Naive thymus-derived CD4-positive, alpha-beta T cell (primary cell): ENCODE measurements at regions of chr10 and their contacts with region 1.

Region 1: GRCh38 chr10:68955832-68956532 is at the start of gene DDX21:
- DNase-seq: peak; percentile 70 to 94 (median 89)
- ATAC-seq: peak; percentile 89
- H3K4me3 ChIP-seq: peak within 1 kb of the TSS; percentile 71
- H3K4me3 Mint-ChIP-seq: peak within 1 kb of the TSS; percentile 91 to 100 (median 98)
- H3K27ac ChIP-seq: peak within 1 kb of the TSS; percentile 97
- H3K27ac Mint-ChIP-seq: peak within 1 kb of the TSS; percentile 96 to 100 (median 99)
- H3K4me1 ChIP-seq: peaks cover 7 to 11% of the 10 kb centered on the region in 2 donors
- H3K4me1 Mint-ChIP-seq: peaks cover 15 to 53% (median 33%) of the 10 kb centered on the region in 7 donors
- H3K27me3 ChIP-seq: no peaks in the 10 kb centered on the region
- H3K27me3 Mint-ChIP-seq: no peaks in the 10 kb centered on the region
- total RNA-seq, gene DDX21: 43.5 to 101 (median 86.7) TPM

Region 2: GRCh38 chr10:67884313-67884841 is 1071.6 kb before region 1 on chr10 and contains the start of gene SIRT1:
- CTCF ChIA-PET with region 1: no interaction called
- POLR2A ChIA-PET with region 1: no interaction called
- intact Hi-C with region 1: loop called in 1 of 2 experiments (anchors 10 kb)
- DNase-seq: peak; percentile 87 to 95 (median 90)
- ATAC-seq: peak; percentile 89
- H3K4me3 ChIP-seq: peak within 1 kb of the TSS; percentile 75
- H3K4me3 Mint-ChIP-seq: peak within 1 kb of the TSS; percentile 86 to 98 (median 95)
- H3K27ac ChIP-seq: peak within 1 kb of the TSS; percentile 83
- H3K27ac Mint-ChIP-seq: peak within 1 kb of the TSS; percentile 90 to 98 (median 95)
- H3K4me1 ChIP-seq: peaks cover 12 to 16% of the 10 kb centered on the region in 2 donors
- H3K4me1 Mint-ChIP-seq: peaks cover 27 to 43% (median 35%) of the 10 kb centered on the region in 7 donors
- H3K27me3 ChIP-seq: no peaks in the 10 kb centered on the region
- H3K27me3 Mint-ChIP-seq: peaks cover 0 to 5% (median 0%) of the 10 kb centered on the region in 5 donors
- total RNA-seq, gene SIRT1: 25.9 to 66.8 (median 59.5) TPM

Region 3: DNA sequence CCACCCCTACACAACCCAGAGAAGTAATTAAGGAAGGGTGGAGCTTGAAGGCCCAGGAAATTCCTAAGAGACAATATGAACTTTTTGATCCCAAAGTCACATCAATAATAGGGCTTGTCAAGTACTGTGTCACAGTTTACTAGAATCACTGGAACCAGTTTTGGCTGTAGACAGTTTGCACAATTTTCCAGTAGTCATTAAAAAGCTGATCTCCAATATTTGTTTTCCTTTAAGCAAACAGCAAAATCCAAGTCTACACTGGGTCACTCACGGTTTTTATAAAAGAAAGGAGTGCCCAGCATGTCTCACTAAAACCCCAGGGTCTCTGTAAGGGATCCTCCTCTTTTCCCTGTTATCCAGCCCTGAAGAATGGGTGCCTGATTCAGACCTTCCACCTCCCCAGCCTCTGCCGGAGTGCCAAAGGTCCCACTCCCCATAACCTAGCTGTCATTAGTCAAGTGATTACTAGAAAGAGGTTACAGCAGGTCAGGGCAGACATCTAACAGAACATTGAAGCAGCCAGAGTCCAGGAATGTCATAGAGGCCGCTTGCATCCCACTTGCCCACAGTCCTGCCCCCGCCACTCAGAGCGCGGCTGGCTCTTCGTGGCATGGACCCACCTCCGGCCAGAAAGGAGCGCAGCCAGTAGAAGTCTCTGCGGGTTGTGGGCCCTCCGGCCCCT is 429.2 kb before region 1 on chr10:
- CTCF ChIA-PET with region 1: no interaction called
- POLR2A ChIA-PET with region 1: no interaction called
- intact Hi-C with region 1: loop called (anchors 1 to 2 kb)
- DNase-seq: peak in 1 of 9 donors; percentile 4
- ATAC-seq: no peak
- H3K4me3 ChIP-seq: peak overlapping the region; percentile 91
- H3K4me3 Mint-ChIP-seq: peak overlapping the region; percentile 87 to 94 (median 92)
- H3K27ac ChIP-seq: peak overlapping the region; percentile 96
- H3K27ac Mint-ChIP-seq: peak overlapping the region; percentile 78 to 97 (median 95)
- H3K4me1 ChIP-seq: peaks cover 0 to 5% of the 10 kb centered on the region in 2 donors
- H3K4me1 Mint-ChIP-seq: peaks cover 0 to 20% (median 7%) of the 10 kb centered on the region in 7 donors
- H3K27me3 ChIP-seq: no peaks in the 10 kb centered on the region
- H3K27me3 Mint-ChIP-seq: no peaks in the 10 kb centered on the region

Region 4: DNA sequence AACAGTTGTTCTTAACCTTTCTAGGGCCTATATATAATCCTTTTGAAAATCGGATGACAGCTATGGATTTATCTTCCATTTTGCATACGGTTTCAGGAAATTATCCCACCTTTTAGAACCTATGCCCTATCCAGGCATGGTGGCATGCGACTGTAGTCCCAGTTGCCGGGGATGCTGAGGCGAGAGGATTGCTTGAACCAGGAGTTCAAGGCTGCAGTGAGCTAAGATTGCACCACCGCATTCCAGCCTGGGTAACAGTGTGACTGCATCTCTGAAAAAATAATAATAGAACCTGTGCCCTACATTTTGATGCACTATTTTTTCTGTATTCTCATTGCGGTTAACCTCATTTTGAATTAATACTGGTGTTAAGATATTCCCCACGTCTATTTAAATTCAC is 223.3 kb before region 1 on chr10:
- CTCF ChIA-PET with region 1: no interaction called
- POLR2A ChIA-PET with region 1: no interaction called
- intact Hi-C with region 1: no loop called
- DNase-seq: no peak
- ATAC-seq: no peak
- H3K4me3 ChIP-seq: no peak overlapping the region
- H3K4me3 Mint-ChIP-seq: no peak overlapping the region
- H3K27ac ChIP-seq: no peak overlapping the region
- H3K27ac Mint-ChIP-seq: peak overlapping the region in 1 of 9 donors; percentile 39
- H3K4me1 ChIP-seq: no peaks in the 10 kb centered on the region
- H3K4me1 Mint-ChIP-seq: peaks cover 9 to 29% (median 13%) of the 10 kb centered on the region in 7 donors
- H3K27me3 ChIP-seq: no peaks in the 10 kb centered on the region
- H3K27me3 Mint-ChIP-seq: no peaks in the 10 kb centered on the region

Region 5: DNA sequence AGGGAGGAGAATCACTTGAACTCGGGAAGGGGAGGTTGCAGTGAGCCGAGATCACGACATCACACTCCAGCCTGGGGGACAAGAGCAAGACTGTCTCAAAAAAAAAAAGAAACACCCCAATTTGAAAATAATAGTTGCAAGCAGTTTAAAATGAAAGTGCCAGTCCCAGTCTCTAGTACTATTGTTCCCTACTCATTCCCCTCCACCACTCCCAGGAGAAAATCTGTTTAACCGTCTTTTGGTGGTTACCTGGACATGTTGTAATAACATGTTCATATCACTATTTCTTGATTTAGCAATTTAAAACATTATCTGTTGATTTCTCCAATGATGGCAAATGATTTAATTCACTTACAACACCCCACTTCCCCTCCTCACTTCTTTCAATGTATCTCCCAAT is 77.3 kb after region 1 on chr10:
- CTCF ChIA-PET with region 1: no interaction called
- POLR2A ChIA-PET with region 1: no interaction called
- intact Hi-C with region 1: no loop called
- DNase-seq: no peak
- ATAC-seq: no peak
- H3K4me3 ChIP-seq: no peak overlapping the region
- H3K4me3 Mint-ChIP-seq: no peak overlapping the region
- H3K27ac ChIP-seq: no peak overlapping the region
- H3K27ac Mint-ChIP-seq: no peak overlapping the region
- H3K4me1 ChIP-seq: no peaks in the 10 kb centered on the region
- H3K4me1 Mint-ChIP-seq: no peaks in the 10 kb centered on the region
- H3K27me3 ChIP-seq: no peaks in the 10 kb centered on the region
- H3K27me3 Mint-ChIP-seq: no peaks in the 10 kb centered on the region

Region 6: GRCh38 chr10:69087590-69088470 is 131.8 kb after region 1 on chr10 and contains the start of gene SRGN:
- CTCF ChIA-PET with region 1: interaction called, 11 read pairs
- POLR2A ChIA-PET with region 1: interaction called, 11 read pairs
- intact Hi-C with region 1: loop called (anchors 1 kb)
- DNase-seq: peak; percentile 54 to 94 (median 87)
- ATAC-seq: peak; percentile 76
- H3K4me3 ChIP-seq: peak within 1 kb of the TSS; percentile 84
- H3K4me3 Mint-ChIP-seq: peak within 1 kb of the TSS; percentile 85 to 95 (median 93)
- H3K27ac ChIP-seq: peak within 1 kb of the TSS; percentile 97
- H3K27ac Mint-ChIP-seq: peak within 1 kb of the TSS; percentile 93 to 99 (median 98)
- H3K4me1 ChIP-seq: peaks cover 28 to 46% of the 10 kb centered on the region in 2 donors
- H3K4me1 Mint-ChIP-seq: peaks cover 25 to 66% (median 58%) of the 10 kb centered on the region in 7 donors
- H3K27me3 ChIP-seq: no peaks in the 10 kb centered on the region
- H3K27me3 Mint-ChIP-seq: no peaks in the 10 kb centered on the region
- total RNA-seq, gene SRGN: 66.6 to 748 (median 227) TPM

Region 7: DNA sequence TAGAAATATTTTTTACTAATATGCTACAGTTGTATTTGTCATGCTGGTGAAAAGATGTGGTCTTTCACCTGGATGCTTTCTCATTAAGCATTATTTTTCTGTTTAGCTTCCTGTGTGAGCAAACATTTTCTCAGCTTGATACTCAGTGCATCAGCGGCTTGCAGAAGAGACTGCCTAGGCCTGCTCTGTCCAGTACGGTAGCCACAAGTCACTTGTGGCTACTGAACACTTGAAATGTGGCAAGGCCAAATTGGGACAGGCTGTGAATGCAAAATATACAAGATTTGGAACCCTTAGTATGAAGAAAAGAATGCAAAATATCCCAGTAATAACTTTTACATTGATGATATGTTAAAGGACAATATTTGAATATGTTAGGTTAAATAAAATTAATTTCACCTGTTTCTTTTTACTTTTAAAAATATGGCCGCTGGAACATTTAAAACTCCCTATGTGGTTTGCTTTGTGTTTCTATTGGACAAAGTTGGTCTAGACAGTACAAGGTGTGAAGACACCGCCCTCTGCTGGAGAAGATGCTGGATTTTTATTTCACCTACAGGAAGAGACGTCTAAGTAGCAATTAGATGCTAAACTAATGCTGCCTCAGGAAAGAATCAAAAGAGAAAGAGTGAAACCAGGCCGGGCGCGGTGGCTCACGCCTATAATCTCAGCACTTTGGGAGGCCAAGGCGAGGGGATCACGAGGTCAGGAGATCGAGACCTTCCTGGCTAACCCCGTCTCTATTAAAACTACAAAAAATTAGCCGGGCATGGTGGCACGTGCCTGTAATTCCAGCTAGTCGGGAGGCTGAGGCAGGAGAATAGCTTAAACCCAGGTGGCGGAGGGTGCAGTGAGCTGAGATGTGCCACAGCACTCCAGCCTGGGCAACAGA is 137.2 kb after region 1 on chr10:
- CTCF ChIA-PET with region 1: interaction called, 11 read pairs
- POLR2A ChIA-PET with region 1: interaction called, 11 read pairs
- intact Hi-C with region 1: loop called (anchors 1 kb)
- DNase-seq: peak; percentile 43 to 89 (median 85)
- ATAC-seq: peak; percentile 61
- H3K4me3 ChIP-seq: peak overlapping the region; percentile 19
- H3K4me3 Mint-ChIP-seq: peak overlapping the region in 7 of 10 donors; percentile 4 to 36 (median 15)
- H3K27ac ChIP-seq: peak overlapping the region; percentile 54
- H3K27ac Mint-ChIP-seq: peak overlapping the region; percentile 23 to 90 (median 63)
- H3K4me1 ChIP-seq: peaks cover 28 to 37% of the 10 kb centered on the region in 2 donors
- H3K4me1 Mint-ChIP-seq: peaks cover 23 to 64% (median 55%) of the 10 kb centered on the region in 7 donors
- H3K27me3 ChIP-seq: no peaks in the 10 kb centered on the region
- H3K27me3 Mint-ChIP-seq: no peaks in the 10 kb centered on the region

Region 8: GRCh38 chr10:69179743-69180524 is 224.0 kb after region 1 on chr10 and contains the start of gene SUPV3L1:
- CTCF ChIA-PET with region 1: no interaction called
- POLR2A ChIA-PET with region 1: no interaction called
- intact Hi-C with region 1: loop called (anchors 1 to 2 kb)
- DNase-seq: peak; percentile 72 to 91 (median 87)
- ATAC-seq: peak; percentile 87
- H3K4me3 ChIP-seq: peak within 1 kb of the TSS; percentile 83
- H3K4me3 Mint-ChIP-seq: peak within 1 kb of the TSS; percentile 85 to 98 (median 96)
- H3K27ac ChIP-seq: peak within 1 kb of the TSS; percentile 95
- H3K27ac Mint-ChIP-seq: peak within 1 kb of the TSS; percentile 98 to 100 (median 99)
- H3K4me1 ChIP-seq: peaks cover 12 to 15% of the 10 kb centered on the region in 2 donors
- H3K4me1 Mint-ChIP-seq: peaks cover 22 to 55% (median 38%) of the 10 kb centered on the region in 7 donors
- H3K27me3 ChIP-seq: no peaks in the 10 kb centered on the region
- H3K27me3 Mint-ChIP-seq: no peaks in the 10 kb centered on the region
- total RNA-seq, gene SUPV3L1: 39.3 to 63.2 (median 42.1) TPM

Region 9: DNA sequence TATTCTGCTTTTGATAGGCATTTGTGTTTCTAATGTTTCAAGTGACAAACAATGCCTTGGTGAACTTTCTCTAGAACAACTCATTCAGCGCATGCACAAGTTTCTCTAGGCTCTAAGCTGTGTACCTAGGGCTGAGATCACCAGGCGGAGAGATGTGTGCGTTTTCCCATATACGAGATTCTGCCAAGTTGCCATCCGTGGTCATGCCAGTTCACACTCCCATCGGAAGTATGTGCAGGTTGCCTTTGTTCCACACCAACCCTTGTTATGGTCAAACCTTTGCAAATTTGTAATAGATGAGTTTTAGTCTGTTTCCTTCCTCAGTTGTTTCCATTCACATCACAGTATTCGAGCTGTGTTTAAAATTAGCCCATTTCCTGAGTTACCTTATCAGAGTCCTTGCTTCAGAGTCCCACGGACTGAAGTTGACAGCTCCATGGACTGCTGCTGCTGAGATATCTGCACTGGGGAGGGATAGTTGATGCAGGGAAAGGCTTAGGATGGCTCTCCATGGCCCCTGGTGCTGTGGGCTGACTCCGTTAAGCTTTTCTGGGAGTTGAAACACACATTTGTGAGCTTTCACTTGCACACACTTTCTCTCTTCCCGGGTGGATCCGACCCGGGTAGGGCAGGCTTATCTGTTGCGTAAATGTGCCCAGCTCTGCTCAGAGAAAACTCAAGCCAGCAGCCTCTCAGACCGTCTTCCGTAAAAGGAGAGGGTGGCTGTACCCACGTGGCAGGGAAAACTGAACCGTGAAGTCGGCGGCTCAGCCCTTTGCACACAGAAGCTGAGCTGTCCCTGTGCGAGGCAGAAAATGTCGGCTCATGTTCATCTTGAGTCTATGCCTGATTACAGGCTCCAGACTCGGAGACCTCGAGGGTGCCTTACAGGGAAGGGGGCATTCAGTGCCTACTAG is 371.7 kb after region 1 on chr10:
- CTCF ChIA-PET with region 1: no interaction called
- POLR2A ChIA-PET with region 1: no interaction called
- intact Hi-C with region 1: no loop called
- DNase-seq: peak in 5 of 9 donors; percentile 30 to 42 (median 35)
- ATAC-seq: peak; percentile 90
- H3K4me3 ChIP-seq: peak overlapping the region; percentile 32
- H3K4me3 Mint-ChIP-seq: peak overlapping the region; percentile 76 to 90 (median 82)
- H3K27ac ChIP-seq: peak overlapping the region; percentile 65
- H3K27ac Mint-ChIP-seq: peak overlapping the region; percentile 68 to 96 (median 89)
- H3K4me1 ChIP-seq: peaks cover 16 to 18% of the 10 kb centered on the region in 2 donors
- H3K4me1 Mint-ChIP-seq: peaks cover 46 to 93% (median 73%) of the 10 kb centered on the region in 7 donors
- H3K27me3 ChIP-seq: no peaks in the 10 kb centered on the region
- H3K27me3 Mint-ChIP-seq: no peaks in the 10 kb centered on the region

Region 10: GRCh38 chr10:69515699-69516259 is 559.8 kb after region 1 on chr10:
- CTCF ChIA-PET with region 1: no interaction called
- POLR2A ChIA-PET with region 1: no interaction called
- intact Hi-C with region 1: no loop called
- DNase-seq: peak; percentile 65 to 82 (median 76)
- ATAC-seq: peak; percentile 92
- H3K4me3 ChIP-seq: no peak overlapping the region
- H3K4me3 Mint-ChIP-seq: no peak overlapping the region
- H3K27ac ChIP-seq: no peak overlapping the region
- H3K27ac Mint-ChIP-seq: no peak overlapping the region
- H3K4me1 ChIP-seq: no peaks in the 10 kb centered on the region
- H3K4me1 Mint-ChIP-seq: no peaks in the 10 kb centered on the region
- H3K27me3 ChIP-seq: no peaks in the 10 kb centered on the region
- H3K27me3 Mint-ChIP-seq: peaks cover 5 to 36% (median 12%) of the 10 kb centered on the region in 5 donors